ENCODE measurements at regions of chr17 and their contacts with region 1.

Region 1: DNA sequence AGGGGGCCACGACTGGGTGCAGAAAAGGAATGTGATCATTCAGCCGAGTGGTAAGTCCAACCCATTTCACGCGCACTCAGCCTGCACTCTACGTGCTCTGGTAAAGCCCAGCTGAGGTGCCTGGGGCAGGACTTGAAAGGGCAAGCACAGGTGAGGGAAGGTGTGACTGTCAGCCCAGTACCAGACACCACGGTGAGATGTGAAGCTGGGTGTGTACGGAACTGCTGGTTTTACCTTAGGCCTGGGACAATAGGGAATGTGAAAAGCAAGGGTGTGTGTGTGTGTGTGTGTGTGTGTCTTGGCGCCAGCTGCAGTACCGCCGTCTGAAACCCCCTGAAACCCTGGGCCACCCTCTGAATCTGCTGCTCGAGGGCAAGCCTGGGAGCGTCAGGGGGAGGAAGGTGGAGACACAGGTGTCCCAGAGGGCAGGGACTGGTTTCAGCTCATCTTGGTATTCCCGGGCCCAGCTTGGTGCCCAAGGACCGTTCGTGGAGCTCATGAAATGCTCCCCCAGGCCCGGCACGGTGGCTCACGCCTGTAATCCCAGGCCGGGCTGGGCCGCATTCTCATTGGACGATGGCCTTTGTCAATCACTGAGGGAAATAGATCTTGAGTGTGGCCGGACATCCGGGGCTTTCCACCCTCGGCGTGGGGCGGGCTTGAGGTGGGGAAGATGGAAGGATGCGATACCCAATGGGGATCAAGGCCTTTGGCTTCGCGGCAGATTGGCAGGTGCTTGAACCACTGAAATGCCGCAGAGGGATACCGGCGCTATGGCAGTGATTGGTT is 27.8 kb upstream of the ST6GALNAC1 start:
- H3K4me3 ChIP-seq: peak overlapping the region; percentile 71
- H3K27ac ChIP-seq: peak overlapping the region; percentile 97
- H3K4me1 ChIP-seq: peaks cover 36% of the 10 kb centered on the region
- CTCF ChIP-seq: peak; percentile 62

Region 2: GRCh38 chr17:76567634-76568432 is 103.5 kb before region 1 on chr17:
- CTCF ChIA-PET with region 1: no interaction called
- POLR2A ChIA-PET with region 1: interaction called, 12 read pairs
- H3K4me3 ChIP-seq: no peak overlapping the region
- H3K27ac ChIP-seq: 0 out of 2 replicates have a peak overlapping the region, but pooled peaks have one; percentile 5
- H3K4me1 ChIP-seq: no peaks in the 10 kb centered on the region
- CTCF ChIP-seq: no peak

Region 3: DNA sequence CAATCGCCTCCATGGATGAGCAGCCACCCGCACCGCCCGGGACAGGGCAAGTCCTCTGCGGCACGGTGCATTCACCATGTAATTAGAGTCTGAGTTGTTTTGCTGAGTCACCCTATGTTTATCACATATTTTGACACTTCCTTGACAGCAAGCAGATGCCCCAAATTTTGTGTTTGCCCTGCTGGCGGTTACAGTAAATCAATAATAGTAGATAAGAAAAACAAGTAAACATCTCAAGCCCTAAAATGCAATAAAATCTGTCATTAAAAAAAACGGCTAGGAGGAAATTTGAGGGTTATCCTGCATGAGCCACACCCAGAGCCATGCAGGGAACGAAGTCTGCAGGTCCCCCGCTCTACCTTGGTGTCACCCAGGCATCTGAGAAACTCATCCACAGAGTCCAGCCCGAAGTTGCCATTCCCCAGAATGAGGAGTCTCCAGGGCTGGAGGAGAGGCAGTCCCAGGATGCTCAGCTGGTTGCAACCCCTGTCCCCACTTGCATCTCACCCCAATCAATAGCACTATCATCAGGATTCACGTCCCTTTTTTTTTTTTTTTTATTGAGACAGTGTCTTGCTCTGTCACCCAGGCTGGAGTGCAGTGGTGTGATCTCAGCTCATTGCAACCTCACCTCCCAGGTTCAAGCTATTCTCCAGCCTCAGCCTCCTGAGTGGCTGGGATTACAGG is 11.2 kb before region 1 on chr17:
- CTCF ChIA-PET with region 1: interaction called, 5 read pairs
- POLR2A ChIA-PET with region 1: interaction called, 13 read pairs
- H3K4me3 ChIP-seq: no peak overlapping the region
- H3K27ac ChIP-seq: peak overlapping the region; percentile 44; the same call in 1 of the 2 replicates
- H3K4me1 ChIP-seq: peaks cover 10% of the 10 kb centered on the region
- CTCF ChIP-seq: no peak

Region 4: DNA sequence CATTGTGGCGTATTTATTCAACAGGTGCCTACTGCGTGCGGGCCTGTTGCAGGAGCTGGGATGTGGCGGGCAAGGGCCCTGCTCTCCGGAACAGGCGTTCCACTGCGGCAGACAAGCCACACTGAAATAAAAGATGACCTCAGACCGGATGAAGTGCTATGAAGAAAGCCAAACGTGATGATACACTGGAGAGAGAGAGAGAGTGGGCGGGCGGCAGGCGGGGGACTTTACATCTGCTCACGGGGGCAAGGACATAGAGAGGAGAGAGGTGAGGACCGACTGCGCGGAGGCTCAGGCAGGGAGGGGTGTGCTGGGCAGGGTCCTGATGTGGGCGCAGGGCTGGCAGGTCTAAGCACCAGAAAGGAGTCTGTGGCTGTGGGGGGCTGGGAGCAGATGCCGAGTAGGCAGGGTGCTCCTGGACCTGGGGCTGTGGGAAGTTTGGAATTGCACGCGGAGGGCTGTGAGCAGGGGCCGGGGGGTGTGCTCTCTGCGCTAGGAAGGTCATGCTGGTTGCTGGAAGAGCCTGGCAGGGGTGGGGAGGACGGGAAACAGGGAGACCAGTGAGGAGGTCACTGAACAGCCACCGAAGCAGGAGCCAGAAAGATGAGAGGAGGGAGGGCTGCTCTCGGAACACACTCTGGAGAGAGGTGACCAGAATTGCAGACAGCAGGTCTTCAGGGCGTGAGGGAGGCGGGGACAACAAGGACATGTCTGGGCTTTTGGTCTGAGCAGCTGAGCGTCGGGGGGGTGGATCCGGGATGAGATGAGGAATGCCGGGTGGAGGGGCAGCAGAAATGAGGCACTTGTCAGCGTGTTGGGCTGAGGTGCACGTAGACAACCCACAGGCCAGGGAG is 29.5 kb after region 1 on chr17:
- CTCF ChIA-PET with region 1: interaction called, 4 read pairs
- POLR2A ChIA-PET with region 1: interaction called, 16 read pairs
- H3K4me3 ChIP-seq: peak overlapping the region; percentile 25
- H3K27ac ChIP-seq: peak overlapping the region; percentile 56
- H3K4me1 ChIP-seq: peaks cover 40% of the 10 kb centered on the region
- CTCF ChIP-seq: no peak

Region 5: GRCh38 chr17:76714822-76715495 is 43.6 kb after region 1 on chr17:
- CTCF ChIA-PET with region 1: interaction called, 10 read pairs
- POLR2A ChIA-PET with region 1: interaction called, 12 read pairs
- H3K4me3 ChIP-seq: no peak overlapping the region
- H3K27ac ChIP-seq: no peak overlapping the region
- H3K4me1 ChIP-seq: peaks cover 35% of the 10 kb centered on the region
- CTCF ChIP-seq: peak; percentile 66; the same call in 1 of the 2 replicates

Region 6: DNA sequence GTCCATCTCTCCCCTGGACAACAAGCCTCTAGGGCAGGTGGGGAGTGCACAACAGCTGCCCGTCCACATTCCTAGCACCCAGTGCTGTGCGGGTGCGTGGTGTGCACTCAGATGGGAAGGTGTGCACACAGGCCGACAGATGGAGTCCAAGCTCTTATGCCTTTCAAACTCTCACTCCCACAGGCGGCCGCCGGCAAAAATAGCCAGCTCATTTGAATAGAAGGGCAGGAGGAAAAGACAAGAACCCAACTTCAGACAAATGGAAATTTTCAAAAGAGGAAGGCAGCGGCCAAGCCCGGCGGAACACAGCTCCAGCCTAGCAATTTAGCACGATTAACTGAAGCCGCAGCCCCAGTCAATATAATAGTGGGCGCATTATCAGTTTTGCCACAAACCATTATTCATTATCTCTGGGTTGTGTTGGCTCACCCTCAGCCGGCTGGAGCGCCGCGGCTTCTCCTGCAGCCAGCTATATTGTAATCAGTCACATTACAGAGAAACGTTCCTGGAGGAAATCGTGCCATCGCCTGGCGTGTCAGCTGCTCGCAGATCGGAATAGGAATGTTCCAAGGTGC is 365.6 kb after region 1 on chr17:
- CTCF ChIA-PET with region 1: no interaction called
- POLR2A ChIA-PET with region 1: no interaction called
- H3K4me3 ChIP-seq: no peak overlapping the region
- H3K27ac ChIP-seq: no peak overlapping the region
- H3K4me1 ChIP-seq: no peaks in the 10 kb centered on the region
- CTCF ChIP-seq: no peak

Measured in HEK293 (cell line).